Activated B cell treated with CpG ODN at 0.5 μM for 24 hours (primary cell): ENCODE measurements at regions of chr16 and their contacts with region 1.

Region 1: GRCh38 chr16:69186642-69187445 is at the start of gene SNTB2:
- DNase-seq: peak; percentile 86
- ATAC-seq: peak; percentile 81
- H3K4me3 Mint-ChIP-seq: peak within 1 kb of the TSS; percentile 98
- H3K27ac Mint-ChIP-seq: peak within 1 kb of the TSS; percentile 99
- H3K4me1 Mint-ChIP-seq: peaks cover 35% of the 10 kb centered on the region
- H3K27me3 Mint-ChIP-seq: no peaks in the 10 kb centered on the region
- CTCF ChIP-seq: no peak
- total RNA-seq, gene SNTB2: 7.7 and 9.9 TPM in 2 replicates

Region 2: DNA sequence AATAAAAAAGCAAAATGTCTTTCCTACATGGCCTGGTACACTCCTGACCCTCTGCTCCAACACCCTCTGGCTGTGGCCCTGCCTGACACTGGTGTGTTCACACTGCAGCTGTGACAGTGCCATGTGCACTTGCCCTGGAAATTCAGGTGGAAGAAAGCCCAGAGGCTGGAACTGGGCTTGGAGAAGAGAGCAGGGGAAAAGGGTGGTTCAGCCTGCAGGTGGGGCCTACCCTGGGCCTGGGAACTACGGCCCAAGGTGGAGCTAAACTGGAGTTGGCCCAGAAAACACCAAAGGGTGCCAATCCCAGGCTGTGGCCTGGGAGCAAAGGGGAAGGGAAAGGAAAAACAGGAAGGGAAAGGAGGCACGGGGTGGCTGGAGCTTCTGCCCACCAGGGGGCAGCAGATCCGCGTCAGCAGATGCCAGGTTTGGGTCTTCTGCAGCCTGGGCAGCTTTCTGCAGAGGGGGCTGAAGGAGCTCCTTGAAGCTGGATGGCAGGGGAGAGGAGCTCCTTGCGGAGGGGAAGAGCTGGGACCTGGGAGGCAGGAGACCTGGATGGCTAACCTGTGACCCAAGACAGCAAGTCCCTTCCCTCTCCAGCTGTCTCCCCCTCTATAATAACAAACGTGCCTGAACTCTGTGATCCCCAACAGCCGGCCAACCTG is 1640.0 kb before region 1 on chr16:
- CTCF ChIA-PET with region 1: no interaction called
- POLR2A ChIA-PET with region 1: no interaction called
- intact Hi-C with region 1: no loop called
- DNase-seq: peak; percentile 73
- ATAC-seq: no peak
- H3K4me3 Mint-ChIP-seq: peak overlapping the region; percentile 58
- H3K27ac Mint-ChIP-seq: peak overlapping the region; percentile 95
- H3K4me1 Mint-ChIP-seq: peaks cover 87% of the 10 kb centered on the region
- H3K27me3 Mint-ChIP-seq: no peaks in the 10 kb centered on the region
- CTCF ChIP-seq: peak; percentile 95

Region 3: DNA sequence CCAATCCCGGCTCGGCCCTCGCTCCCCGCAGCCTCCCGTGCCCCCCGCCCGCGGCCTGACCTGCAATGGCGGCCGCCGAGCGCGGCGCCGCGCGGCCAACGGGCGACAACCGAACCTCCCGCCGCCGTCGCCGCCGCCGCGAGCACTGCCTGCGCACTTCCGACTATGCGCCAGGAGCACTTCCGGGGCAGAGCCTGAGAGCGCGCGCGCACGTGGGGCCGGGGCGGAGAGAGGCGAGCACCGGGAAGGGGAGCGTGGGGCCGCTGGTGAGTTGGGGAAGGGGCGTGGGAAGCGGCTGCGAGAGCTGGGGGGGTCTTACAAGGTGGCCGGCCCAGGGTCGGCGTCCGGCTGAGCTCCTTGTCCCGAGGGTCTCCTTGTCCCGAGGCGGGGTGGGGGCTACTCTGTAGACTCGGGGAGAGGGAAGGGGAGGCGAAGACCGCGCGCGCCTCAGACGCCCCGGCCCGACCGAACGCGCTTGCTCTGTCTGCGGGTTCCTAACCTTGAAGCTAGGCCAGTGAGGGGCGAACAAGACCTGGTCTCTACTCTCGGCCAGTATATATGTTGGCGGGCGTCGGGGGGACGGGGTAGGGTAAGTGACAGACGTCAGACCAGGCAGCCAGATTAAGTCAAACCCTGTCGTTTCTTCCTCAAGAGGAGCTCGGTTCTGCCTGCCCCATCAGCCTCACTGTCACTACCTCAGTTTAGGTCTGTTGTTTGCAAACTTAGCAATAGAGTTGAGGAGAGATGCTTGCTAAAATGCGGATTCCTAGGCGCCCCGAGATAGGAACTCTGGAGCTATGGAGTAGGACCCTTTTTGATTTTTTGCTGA is 54.2 kb before region 1 on chr16 and contains the starts of genes CHTF8 and UTP4:
- CTCF ChIA-PET with region 1: no interaction called
- POLR2A ChIA-PET with region 1: interaction called, 20 read pairs
- intact Hi-C with region 1: loop called (anchors 1 kb)
- DNase-seq: peak; percentile 89
- ATAC-seq: peak; percentile 85
- H3K4me3 Mint-ChIP-seq: peak within 1 kb of the TSS; percentile 94
- H3K27ac Mint-ChIP-seq: peak within 1 kb of the TSS; percentile 85
- H3K4me1 Mint-ChIP-seq: peaks cover 47% of the 10 kb centered on the region
- H3K27me3 Mint-ChIP-seq: no peaks in the 10 kb centered on the region
- CTCF ChIP-seq: no peak
- total RNA-seq, gene CHTF8: 134 and 143 TPM in 2 replicates
- total RNA-seq, gene UTP4: 53.5 and 55.3 TPM in 2 replicates

Region 4: DNA sequence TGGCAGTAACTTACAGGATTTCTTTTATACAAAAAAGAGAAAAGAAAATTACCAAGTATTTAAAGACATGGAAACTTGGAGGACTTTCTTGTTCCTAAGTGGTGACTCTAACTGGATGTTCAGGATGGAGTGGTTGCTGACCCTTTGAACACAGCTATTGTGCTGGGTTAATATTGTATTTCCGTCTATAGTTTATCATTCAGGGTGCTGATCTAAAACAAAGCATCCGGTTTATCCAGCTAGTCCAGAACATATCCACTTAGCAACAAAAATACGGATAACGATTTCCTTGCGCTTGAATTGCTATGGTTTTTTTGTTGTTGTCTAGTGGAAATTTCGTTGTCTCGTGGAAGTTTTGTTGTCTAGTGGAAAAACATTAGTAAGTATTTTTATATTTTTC is 38.3 kb after region 1 on chr16:
- CTCF ChIA-PET with region 1: no interaction called
- POLR2A ChIA-PET with region 1: no interaction called
- intact Hi-C with region 1: loop called (anchors 5 kb)
- DNase-seq: no peak
- ATAC-seq: no peak
- H3K4me3 Mint-ChIP-seq: no peak overlapping the region
- H3K27ac Mint-ChIP-seq: no peak overlapping the region
- H3K4me1 Mint-ChIP-seq: no peaks in the 10 kb centered on the region
- H3K27me3 Mint-ChIP-seq: no peaks in the 10 kb centered on the region
- CTCF ChIP-seq: no peak

Region 5: DNA sequence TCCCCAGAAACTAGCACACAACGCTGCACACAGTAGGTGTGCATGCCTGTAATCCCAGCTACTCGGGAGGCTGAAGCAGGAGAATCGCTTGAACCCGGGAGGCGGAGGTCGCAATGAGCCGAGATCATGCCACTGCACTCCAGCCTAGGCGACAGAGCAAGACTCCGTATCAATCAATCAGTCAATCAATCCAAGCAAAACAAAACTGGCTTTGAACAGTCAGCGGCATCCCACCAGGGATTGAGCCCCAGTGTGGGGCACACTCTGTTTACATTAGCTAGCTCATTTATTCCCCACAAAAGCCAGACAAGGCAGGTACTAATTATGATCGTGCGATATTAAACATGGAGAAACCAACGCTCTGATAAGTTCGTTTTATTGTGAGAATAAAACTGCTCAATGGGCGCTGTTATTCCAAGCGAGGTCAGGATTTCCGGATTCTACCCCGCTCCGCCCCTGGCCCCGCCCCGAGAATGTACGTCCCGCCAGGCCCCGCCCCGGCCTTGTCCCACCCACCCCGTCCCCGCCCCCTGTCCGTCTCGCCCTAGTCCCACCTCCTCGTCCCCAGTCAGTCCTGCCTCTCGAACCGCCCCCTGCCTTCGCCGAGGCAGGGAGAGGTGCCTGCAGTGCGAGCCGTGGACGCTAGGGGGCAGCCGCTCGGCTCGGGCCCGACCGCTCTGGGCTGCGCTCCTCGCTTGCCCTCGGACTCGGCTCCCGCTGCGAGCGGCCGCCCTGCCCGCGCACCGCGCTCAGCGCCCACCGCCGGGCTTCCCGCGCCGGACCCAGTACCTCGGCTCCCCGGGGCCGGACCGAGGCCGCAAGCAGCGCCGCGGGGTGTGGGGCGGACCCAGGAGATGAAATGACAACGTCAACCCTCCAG is 124.0 kb after region 1 on chr16 and contains the start of gene VPS4A:
- CTCF ChIA-PET with region 1: no interaction called
- POLR2A ChIA-PET with region 1: no interaction called
- intact Hi-C with region 1: loop called (anchors 2 kb)
- DNase-seq: peak; percentile 99
- ATAC-seq: peak; percentile 98
- H3K4me3 Mint-ChIP-seq: peak within 1 kb of the TSS; percentile 98
- H3K27ac Mint-ChIP-seq: peak within 1 kb of the TSS; percentile 91
- H3K4me1 Mint-ChIP-seq: peaks cover 27% of the 10 kb centered on the region
- H3K27me3 Mint-ChIP-seq: no peaks in the 10 kb centered on the region
- CTCF ChIP-seq: no peak
- total RNA-seq, gene VPS4A: 34.2 and 41.7 TPM in 2 replicates